ENCODE measurements at regions of chr7 and their contacts with region 1.

Region 1: DNA sequence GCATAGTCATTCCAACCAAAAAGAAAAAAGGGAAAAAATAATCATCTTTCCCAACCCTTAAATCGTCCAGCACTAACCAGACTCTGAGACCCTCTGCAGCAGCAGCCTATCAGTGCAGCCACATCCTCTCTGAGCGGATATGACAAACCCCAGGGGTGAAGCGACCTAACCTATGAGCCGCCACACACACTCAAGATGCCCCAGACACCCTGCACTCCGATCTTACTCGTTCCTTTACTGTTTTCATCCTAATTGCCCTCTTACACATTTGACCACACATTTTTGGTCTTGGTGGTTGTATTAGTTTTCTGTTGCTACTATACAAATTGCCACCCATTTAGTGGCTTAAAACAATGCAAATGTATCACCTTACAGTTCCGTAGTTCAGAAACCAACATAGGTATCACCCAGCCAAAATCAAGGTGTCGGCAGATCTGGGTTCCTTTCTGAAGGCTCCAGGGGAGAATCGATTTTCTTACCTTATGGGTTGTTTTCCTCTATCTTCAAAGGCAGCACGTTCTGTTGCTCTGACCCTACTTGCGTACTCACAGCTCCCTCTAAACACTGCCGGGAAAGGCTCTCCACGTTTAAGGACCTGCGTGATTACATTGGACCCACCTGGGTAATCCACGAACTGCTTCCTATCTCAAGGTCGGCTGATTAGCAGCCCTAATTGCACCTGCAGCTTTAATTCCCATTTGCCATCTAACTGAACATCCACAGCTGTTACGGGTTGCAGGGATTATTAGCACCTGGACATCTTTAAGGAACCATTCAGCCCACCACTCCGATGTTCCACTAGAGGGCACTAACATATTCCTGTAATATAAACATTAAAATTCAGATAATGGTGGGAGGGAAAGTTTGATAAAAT is 37.3 kb upstream of the PRSS1 start:
- DNase-seq: peak; percentile 44
- H3K4me3 ChIP-seq: no peak overlapping the region
- H3K27ac ChIP-seq: no peak overlapping the region
- H3K4me1 ChIP-seq: peaks cover 20% of the 10 kb centered on the region
- H3K27me3 ChIP-seq: peaks cover 7 to 16% of the 10 kb centered on the region in 2 experiments
- CTCF ChIP-seq: peak; percentile 52 to 69
- POLR2A ChIP-seq: no peak

Region 2: DNA sequence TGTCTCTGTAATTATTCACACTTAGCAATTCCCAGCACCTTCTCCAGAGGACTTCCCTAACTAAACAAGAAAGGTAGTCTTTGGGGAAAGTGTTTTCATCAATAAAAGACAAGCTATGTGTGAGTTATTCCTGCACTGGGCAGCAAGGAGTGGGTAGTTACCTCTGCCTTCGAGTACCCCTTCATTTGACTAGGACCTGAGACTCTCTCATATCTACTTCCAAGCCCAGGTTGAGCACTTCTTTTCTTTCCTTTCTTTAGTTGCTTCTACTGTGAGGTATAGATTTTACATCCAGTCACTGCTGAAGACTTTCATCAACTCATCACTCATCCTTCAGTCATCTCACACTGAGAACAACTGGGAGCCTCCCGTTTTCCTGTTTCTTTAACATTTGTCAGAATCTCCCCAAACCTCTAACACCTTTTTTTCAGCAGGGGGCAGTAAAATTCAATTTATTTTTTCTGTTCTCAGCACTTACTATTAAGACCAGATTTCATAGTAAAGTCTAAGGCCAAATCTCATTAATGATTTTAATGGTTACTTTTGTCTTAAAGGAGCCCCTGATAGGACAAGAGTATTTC is 42.8 kb before region 1 on chr7:
- CTCF ChIA-PET with region 1: interaction called, 7 read pairs
- POLR2A ChIA-PET with region 1: no interaction called
- dilution Hi-C with region 1: no loop called
- intact Hi-C with region 1: loop called (anchors 1 kb)
- DNase-seq: peak; percentile 53
- H3K4me3 ChIP-seq: no peak overlapping the region
- H3K27ac ChIP-seq: no peak overlapping the region
- H3K4me1 ChIP-seq: no peaks in the 10 kb centered on the region
- H3K27me3 ChIP-seq: peaks cover 2 to 4% of the 10 kb centered on the region in 2 experiments
- CTCF ChIP-seq: peak; percentile 8 to 27
- POLR2A ChIP-seq: no peak

Region 3: DNA sequence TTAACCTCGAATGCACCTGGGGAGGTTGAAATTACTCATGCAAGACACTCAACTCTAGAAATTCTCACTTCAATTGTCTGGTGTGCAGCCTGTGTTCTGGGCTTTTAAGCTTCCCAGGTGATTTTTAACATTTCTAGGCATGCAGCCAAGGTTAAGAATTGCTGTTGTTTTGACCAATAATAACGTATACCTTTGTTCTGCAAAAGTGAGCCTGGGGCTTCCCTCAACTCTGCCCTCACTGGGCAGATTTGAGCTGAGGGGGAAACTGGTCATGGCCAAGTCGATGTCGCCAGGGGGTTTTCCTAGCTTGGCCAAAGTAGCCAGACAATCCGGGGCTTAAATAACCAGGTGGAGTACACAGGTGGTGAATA is 59.4 kb after region 1 on chr7:
- CTCF ChIA-PET with region 1: interaction called, 17 read pairs
- POLR2A ChIA-PET with region 1: interaction called, 3 read pairs
- dilution Hi-C with region 1: no loop called
- intact Hi-C with region 1: loop called (anchors 1 kb)
- DNase-seq: no peak
- H3K4me3 ChIP-seq: no peak overlapping the region
- H3K27ac ChIP-seq: no peak overlapping the region
- H3K4me1 ChIP-seq: peaks cover 8% of the 10 kb centered on the region
- H3K27me3 ChIP-seq: peaks cover 11 to 31% of the 10 kb centered on the region in 2 experiments
- CTCF ChIP-seq: no peak
- POLR2A ChIP-seq: no peak

Region 4: DNA sequence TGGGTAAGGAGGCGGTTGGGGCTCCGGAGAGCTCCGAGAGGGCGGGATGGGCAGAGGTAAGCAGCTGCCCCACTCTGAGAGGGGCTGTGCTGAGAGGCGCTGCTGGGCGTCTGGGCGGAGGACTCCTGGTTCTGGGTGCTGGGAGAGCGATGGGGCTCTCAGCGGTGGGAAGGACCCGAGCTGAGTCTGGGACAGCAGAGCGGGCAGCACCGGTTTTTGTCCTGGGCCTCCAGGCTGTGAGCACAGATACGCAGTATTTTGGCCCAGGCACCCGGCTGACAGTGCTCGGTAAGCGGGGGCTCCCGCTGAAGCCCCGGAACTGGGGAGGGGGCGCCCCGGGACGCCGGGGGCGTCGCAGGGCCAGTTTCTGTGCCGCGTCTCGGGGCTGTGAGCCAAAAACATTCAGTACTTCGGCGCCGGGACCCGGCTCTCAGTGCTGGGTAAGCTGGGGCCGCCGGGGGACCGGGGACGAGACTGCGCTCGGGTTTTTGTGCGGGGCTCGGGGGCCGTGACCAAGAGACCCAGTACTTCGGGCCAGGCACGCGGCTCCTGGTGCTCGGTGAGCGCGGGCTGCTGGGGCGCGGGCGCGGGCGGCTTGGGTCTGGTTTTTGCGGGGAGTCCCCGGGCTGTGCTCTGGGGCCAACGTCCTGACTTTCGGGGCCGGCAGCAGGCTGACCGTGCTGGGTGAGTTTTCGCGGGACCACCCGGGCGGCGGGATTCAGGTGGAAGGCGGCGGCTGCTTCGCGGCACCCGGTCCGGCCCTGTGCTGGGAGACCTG is 84.8 kb after region 1 on chr7:
- CTCF ChIA-PET with region 1: interaction called, 4 read pairs
- POLR2A ChIA-PET with region 1: no interaction called
- dilution Hi-C with region 1: no loop called
- intact Hi-C with region 1: loop called (anchors 5 kb)
- DNase-seq: no peak
- H3K4me3 ChIP-seq: peak overlapping the region; percentile 62 to 76 (median 69)
- H3K27ac ChIP-seq: peak overlapping the region; percentile 63
- H3K4me1 ChIP-seq: peaks cover 28% of the 10 kb centered on the region
- H3K27me3 ChIP-seq: no peaks in the 10 kb centered on the region
- CTCF ChIP-seq: no peak
- POLR2A ChIP-seq: no peak

Measured in endothelial cell of umbilical vein (primary cell).